Vagina (tissue), 2 donors: ENCODE measurements at regions of chr4 and their contacts with region 1.

Region 1: DNA sequence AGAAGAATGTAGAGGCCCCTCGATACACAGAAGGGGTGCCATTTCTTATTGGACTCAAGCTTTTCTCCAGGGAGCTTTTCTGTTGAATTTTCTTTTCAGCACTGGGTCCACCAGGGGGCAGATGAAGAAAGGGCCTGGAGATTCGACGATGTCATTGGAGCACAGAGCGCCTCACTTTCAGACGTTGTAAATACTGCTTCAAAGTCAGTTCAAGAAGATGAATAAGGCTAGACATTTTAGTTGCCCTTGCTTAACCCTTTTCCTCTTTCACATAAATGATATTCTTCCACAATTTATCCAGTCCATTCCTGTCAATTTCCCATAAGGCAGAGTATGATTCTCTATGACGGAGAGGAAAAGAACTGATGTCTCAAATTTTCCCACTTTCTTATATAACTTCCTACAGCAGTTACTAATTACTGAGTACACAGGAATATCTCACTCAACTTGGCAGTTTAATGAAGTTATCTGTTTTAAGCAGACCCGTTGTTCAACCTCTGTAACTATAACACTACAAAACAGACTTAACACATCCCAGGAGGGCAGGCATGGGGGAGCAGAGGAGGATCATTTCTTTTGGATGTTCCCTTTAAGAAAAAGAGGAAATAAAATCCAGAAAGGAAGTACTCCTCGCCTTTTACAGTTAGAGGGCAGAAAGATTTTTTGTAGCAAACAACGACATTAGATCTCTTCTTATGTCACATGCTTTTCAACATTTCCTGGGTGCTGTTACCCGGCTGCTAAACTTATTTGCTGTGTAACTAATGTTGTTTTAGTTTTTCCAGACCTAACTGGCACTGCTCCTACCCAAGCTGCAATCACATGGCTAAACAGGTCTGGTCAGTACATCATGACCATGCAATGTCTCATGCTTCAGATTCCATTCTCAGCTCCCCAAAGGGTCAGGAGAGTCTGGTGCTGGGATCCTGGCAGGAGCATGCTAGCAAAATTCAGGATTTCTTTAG is 12.2 kb upstream of the CENPU start:
- DNase-seq: peak in 1 of 2 donors; percentile 93
- H3K4me3 ChIP-seq: no peak overlapping the region
- H3K27ac ChIP-seq: peak overlapping the region; percentile 77
- H3K4me1 ChIP-seq: peaks cover 47% of the 10 kb centered on the region
- H3K27me3 ChIP-seq: no peaks in the 10 kb centered on the region
- CTCF ChIP-seq: peak; percentile 65 to 89 (median 85)
- POLR2A ChIP-seq: no peak

Region 2: DNA sequence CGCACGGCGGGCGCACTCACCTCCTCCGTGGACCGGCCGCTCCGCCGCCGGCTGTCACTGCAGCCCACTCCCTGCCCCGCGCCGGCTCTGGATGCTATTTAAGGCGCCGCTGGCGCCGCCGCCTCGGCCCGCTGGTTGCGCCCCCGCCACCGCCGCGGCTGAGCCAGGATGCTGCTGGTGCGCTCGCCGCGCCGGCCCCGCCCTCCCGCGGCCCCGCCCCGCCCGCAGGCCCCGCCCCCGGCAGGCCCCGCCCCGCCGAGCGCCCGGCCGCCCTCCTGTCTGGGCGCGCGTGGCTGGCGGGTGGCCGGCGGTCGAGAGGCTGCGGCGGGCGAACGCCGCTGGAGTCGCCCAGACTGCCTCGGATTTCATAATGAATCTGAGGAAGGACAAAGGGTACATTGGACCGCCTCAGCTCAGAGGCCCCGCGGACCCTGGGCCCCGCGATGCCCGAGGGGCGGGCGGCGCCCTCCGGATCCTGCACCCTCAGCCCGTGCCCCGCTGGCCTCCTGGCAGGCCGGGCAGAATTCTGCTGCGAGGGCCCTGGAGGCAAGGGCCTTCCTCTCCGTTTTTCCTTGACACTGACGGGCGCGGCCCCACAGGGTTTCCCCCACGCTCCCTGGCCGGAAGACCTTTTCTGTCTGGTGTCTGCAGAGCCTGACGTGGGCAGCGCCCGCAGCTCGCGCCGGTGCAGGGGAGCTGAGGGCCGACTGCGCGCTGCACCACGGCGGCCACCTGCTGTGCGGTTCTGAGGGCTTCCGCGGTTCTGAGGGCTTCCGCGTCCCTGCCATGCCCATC is 80.0 kb after region 1 on chr4 and contains the start of gene ACSL1:
- intact Hi-C with region 1: loop called (anchors 5 kb)
- DNase-seq: no peak
- H3K4me3 ChIP-seq: peak within 1 kb of the TSS; percentile 61 to 95
- H3K27ac ChIP-seq: peak within 1 kb of the TSS; percentile 76
- H3K4me1 ChIP-seq: peaks cover 36% of the 10 kb centered on the region
- H3K27me3 ChIP-seq: no peaks in the 10 kb centered on the region
- CTCF ChIP-seq: no peak
- POLR2A ChIP-seq: peak in 1 of 2 donors; percentile 76
- total RNA-seq, gene ACSL1: 106 TPM

Region 3: DNA sequence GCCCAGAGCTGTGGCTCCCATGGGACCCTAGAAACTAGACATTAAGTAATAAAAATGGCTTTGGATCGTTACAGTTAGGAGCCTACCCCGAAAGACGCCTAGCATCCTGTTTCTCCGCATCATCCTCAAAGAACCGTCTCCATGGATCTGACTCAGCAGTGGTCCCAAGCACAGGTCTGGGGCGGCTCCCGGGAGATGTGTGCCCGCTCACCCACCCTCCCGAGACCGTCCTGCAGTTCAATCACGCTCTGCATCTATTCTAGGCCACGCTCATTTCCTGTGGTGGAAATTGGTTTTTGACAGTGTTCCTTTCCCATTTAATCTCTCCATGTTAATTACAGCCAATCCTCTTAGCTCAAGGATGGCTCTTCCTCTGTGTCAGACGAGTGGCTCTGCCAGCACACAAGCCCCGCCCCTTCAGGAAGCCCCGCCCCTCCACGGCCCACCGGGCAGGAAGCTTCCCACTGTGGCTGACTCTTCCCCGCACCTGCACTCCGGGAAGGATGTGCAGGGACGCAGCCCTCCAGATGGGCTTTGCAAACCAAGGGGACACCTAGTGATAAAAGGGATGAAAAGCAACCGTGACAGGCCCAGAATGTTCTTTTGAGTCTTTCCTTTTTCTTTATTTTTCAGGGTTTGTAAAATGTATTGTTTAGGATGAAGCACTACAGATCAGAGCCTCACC is 237.7 kb after region 1 on chr4:
- intact Hi-C with region 1: loop called (anchors 10 kb)
- DNase-seq: no peak
- H3K4me3 ChIP-seq: no peak overlapping the region
- H3K27ac ChIP-seq: no peak overlapping the region
- H3K4me1 ChIP-seq: no peaks in the 10 kb centered on the region
- H3K27me3 ChIP-seq: no peaks in the 10 kb centered on the region
- CTCF ChIP-seq: peak in 1 of 3 experiments; percentile 26
- POLR2A ChIP-seq: no peak

Region 4: DNA sequence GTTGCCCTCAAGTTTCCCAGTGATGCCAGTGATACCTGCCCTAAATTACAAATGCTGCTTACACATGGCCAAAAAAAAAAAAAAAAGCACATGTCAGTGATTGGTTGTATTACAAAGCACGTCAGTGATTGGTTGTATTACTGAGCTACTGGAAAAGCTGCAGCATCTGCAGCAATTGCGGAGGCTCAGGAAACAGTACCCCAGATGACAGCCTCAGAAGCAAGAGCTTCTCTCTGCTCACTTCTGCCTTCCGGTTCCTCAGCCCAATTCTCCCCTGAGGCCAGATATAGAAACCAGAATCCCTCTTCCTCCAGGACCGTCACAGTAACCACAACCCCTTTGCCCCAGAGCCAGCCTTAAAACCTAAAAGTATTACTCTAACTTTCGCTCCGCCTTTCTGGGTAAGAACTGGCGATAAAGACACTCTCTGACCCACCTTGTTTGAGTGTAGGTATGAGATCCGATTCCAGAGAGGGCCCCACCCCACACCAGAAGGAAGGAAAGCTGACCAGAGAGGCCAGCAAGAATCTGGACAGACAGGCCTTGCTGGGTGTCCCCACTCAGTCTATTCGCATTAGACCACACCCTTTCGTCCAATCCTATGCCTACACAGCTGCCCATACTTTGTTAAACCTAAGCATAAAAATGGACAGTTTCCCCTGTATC is 1150.8 kb after region 1 on chr4:
- intact Hi-C with region 1: no loop called
- DNase-seq: no peak
- H3K4me3 ChIP-seq: no peak overlapping the region
- H3K27ac ChIP-seq: no peak overlapping the region
- H3K4me1 ChIP-seq: no peaks in the 10 kb centered on the region
- H3K27me3 ChIP-seq: no peaks in the 10 kb centered on the region
- CTCF ChIP-seq: no peak
- POLR2A ChIP-seq: no peak